AG04450 (cell line): ENCODE measurements at regions of chr4 and their contacts with region 1.

Region 1: DNA sequence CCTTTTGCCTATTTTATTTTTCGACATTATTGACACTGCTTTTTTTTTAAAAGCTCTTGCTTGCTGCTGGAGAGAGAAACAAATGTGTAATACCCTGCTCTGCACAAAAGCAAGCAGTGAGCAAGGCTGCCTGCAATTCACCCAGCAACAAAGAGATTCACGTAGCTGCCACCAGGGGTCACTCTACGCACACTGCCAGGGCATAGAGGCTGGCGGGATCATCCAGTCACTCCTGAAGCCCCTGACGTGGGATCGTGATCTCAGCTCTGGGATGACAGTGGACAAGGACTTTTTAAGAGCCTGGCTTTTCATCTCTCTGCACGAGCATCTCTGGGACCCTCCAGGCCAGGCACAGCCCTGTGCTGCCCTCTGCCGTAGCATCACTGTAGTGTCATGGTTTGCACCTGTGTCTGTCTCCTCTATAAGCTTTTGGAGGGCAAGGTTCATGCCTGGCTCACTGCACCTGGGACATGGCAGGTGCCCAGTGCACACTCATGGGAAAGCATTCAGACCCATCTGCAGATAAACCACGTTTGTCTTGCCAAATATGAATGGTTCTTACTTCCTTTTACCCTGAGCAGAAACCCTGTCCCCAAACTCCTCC is 19.8 kb downstream of the C4orf50 start:
- DNase-seq: peak; percentile 26
- H3K4me3 ChIP-seq: no peak overlapping the region
- H3K27ac ChIP-seq: no peak overlapping the region
- H3K27me3 ChIP-seq: peaks cover 3% of the 10 kb centered on the region
- CTCF ChIP-seq: peak; percentile 91

Region 2: GRCh38 chr4:5982156-5982973 is 16.1 kb before region 1 on chr4:
- CTCF ChIA-PET with region 1: interaction called, 35 read pairs
- POLR2A ChIA-PET with region 1: no interaction called
- DNase-seq: no peak
- H3K4me3 ChIP-seq: no peak overlapping the region
- H3K27ac ChIP-seq: no peak overlapping the region
- H3K27me3 ChIP-seq: no peaks in the 10 kb centered on the region
- CTCF ChIP-seq: no peak

Region 3: GRCh38 chr4:6011686-6012085 is 13.3 kb after region 1 on chr4:
- CTCF ChIA-PET with region 1: interaction called, 22 read pairs
- POLR2A ChIA-PET with region 1: no interaction called
- DNase-seq: no peak
- H3K4me3 ChIP-seq: no peak overlapping the region
- H3K27ac ChIP-seq: no peak overlapping the region
- H3K27me3 ChIP-seq: peaks cover 2% of the 10 kb centered on the region
- CTCF ChIP-seq: no peak

Region 4: GRCh38 chr4:6041800-6042199 is 43.4 kb after region 1 on chr4:
- CTCF ChIA-PET with region 1: no interaction called
- POLR2A ChIA-PET with region 1: no interaction called
- DNase-seq: no peak
- H3K4me3 ChIP-seq: no peak overlapping the region
- H3K27ac ChIP-seq: no peak overlapping the region
- H3K27me3 ChIP-seq: no peaks in the 10 kb centered on the region
- CTCF ChIP-seq: no peak

Region 5: GRCh38 chr4:6087673-6088341 is 89.4 kb after region 1 on chr4:
- CTCF ChIA-PET with region 1: interaction called, 15 read pairs
- POLR2A ChIA-PET with region 1: no interaction called
- DNase-seq: no peak
- H3K4me3 ChIP-seq: no peak overlapping the region
- H3K27ac ChIP-seq: no peak overlapping the region
- H3K27me3 ChIP-seq: no peaks in the 10 kb centered on the region
- CTCF ChIP-seq: peak; percentile 42

Region 6: GRCh38 chr4:6221851-6222760 is 223.7 kb after region 1 on chr4:
- CTCF ChIA-PET with region 1: no interaction called
- POLR2A ChIA-PET with region 1: no interaction called
- DNase-seq: no peak
- H3K4me3 ChIP-seq: no peak overlapping the region
- H3K27ac ChIP-seq: no peak overlapping the region
- H3K27me3 ChIP-seq: peaks cover 15% of the 10 kb centered on the region
- CTCF ChIP-seq: no peak